ENCODE measurements at regions of chr4 and their contacts with region 1.

Region 1: GRCh38 chr4:110055158-110055768 is 142.6 kb downstream of the EGF start:
- DNase-seq: peak; percentile 80
- ATAC-seq: peak; percentile 93
- H3K4me3 ChIP-seq: peak overlapping the region; percentile 39; the same call in 1 of the 2 replicates
- H3K27ac ChIP-seq: peak overlapping the region; percentile 68
- H3K4me1 ChIP-seq: peaks cover 25% of the 10 kb centered on the region
- H3K27me3 ChIP-seq: no peaks in the 10 kb centered on the region
- CTCF ChIP-seq: no peak
- EP300 ChIP-seq: 0 out of 4 replicates have a peak, but pooled peaks of 1 of the 2 experiments have one; percentile 31
- POLR2A ChIP-seq: no peak
- RAD21 ChIP-seq: no peak

Region 2: DNA sequence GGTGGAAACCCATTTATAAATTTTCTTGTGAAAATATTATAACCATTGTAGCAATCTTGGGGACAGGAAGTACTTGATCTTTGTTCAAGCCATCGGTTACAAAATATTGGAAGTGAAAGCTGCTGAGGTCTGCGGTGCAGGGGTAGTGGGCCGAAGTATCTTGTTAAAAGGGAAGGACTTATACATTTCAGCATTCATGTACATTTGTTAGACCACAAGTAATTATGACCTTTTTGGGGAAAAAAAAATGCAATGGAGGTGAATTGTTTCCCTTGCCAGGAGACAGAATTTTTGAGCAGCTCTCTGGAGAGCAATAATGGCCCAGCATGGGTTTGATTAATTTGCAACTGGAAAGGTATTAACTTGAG is 21.3 kb before region 1 on chr4:
- CTCF ChIA-PET with region 1: interaction called, 13 read pairs
- POLR2A ChIA-PET with region 1: interaction called, 3 read pairs
- RAD21 ChIA-PET with region 1: interaction called, 12 read pairs
- SMC1A ChIA-PET with region 1: interaction called, 17 read pairs
- in situ Hi-C with region 1: no loop called
- intact Hi-C with region 1: no loop called
- DNase-seq: peak; percentile 63
- ATAC-seq: peak; percentile 99
- H3K4me3 ChIP-seq: no peak overlapping the region
- H3K27ac ChIP-seq: no peak overlapping the region
- H3K4me1 ChIP-seq: peaks cover 14% of the 10 kb centered on the region
- H3K27me3 ChIP-seq: no peaks in the 10 kb centered on the region
- CTCF ChIP-seq: no peak
- EP300 ChIP-seq: peak; percentile 58 to 77; a peak in 3 of 4 replicates
- POLR2A ChIP-seq: no peak
- RAD21 ChIP-seq: no peak

Region 3: GRCh38 chr4:110088670-110089069 is 33.4 kb after region 1 on chr4:
- CTCF ChIA-PET with region 1: interaction called, 11 read pairs
- POLR2A ChIA-PET with region 1: interaction called, 3 read pairs
- RAD21 ChIA-PET with region 1: interaction called, 6 read pairs
- SMC1A ChIA-PET with region 1: interaction called, 12 read pairs
- in situ Hi-C with region 1: no loop called
- intact Hi-C with region 1: no loop called
- DNase-seq: peak; percentile 23
- ATAC-seq: peak; percentile 90
- H3K4me3 ChIP-seq: no peak overlapping the region
- H3K27ac ChIP-seq: no peak overlapping the region
- H3K4me1 ChIP-seq: no peaks in the 10 kb centered on the region
- H3K27me3 ChIP-seq: no peaks in the 10 kb centered on the region
- CTCF ChIP-seq: no peak
- EP300 ChIP-seq: no peak
- POLR2A ChIP-seq: no peak
- RAD21 ChIP-seq: no peak

Region 4: DNA sequence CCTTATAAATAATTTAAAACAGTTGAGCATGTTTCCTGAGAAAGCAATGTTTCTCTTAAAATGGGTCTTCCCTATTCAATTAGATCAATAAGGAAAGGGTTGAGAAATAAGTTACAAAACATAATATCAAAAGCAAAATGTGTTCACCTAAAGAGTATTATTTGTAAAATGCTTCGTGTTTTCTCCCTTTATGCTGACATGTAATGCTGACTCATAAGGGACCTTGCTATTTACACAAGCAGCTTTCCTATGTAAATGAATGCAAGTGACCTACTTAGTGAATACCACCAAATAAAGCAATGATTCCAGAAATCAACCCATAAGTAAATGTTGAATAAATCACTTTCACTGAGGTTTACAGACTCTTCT is 51.6 kb after region 1 on chr4:
- CTCF ChIA-PET with region 1: interaction called, 22 read pairs
- POLR2A ChIA-PET with region 1: no interaction called
- RAD21 ChIA-PET with region 1: interaction called, 6 read pairs
- SMC1A ChIA-PET with region 1: interaction called, 13 read pairs
- in situ Hi-C with region 1: no loop called
- intact Hi-C with region 1: loop called (anchors 5 kb)
- DNase-seq: no peak
- ATAC-seq: peak; percentile 79
- H3K4me3 ChIP-seq: no peak overlapping the region
- H3K27ac ChIP-seq: peak overlapping the region; percentile 14; the same call in 1 of the 2 replicates
- H3K4me1 ChIP-seq: peaks cover 26% of the 10 kb centered on the region
- H3K27me3 ChIP-seq: no peaks in the 10 kb centered on the region
- CTCF ChIP-seq: no peak
- EP300 ChIP-seq: peak in 1 of 2 experiments; percentile 30; a peak in 1 of 4 replicates
- POLR2A ChIP-seq: no peak
- RAD21 ChIP-seq: no peak

Region 5: GRCh38 chr4:110184140-110184790 is 129.0 kb after region 1 on chr4:
- CTCF ChIA-PET with region 1: interaction called, 17 read pairs
- POLR2A ChIA-PET with region 1: interaction called, 5 read pairs
- RAD21 ChIA-PET with region 1: interaction called, 7 read pairs
- SMC1A ChIA-PET with region 1: interaction called, 14 read pairs
- in situ Hi-C with region 1: no loop called
- intact Hi-C with region 1: no loop called
- DNase-seq: no peak
- ATAC-seq: peak; percentile 58
- H3K4me3 ChIP-seq: no peak overlapping the region
- H3K27ac ChIP-seq: no peak overlapping the region
- H3K4me1 ChIP-seq: peaks cover 7% of the 10 kb centered on the region; the same call in 1 of the 2 replicates
- H3K27me3 ChIP-seq: no peaks in the 10 kb centered on the region
- CTCF ChIP-seq: no peak
- EP300 ChIP-seq: no peak
- POLR2A ChIP-seq: no peak
- RAD21 ChIP-seq: no peak

Region 6: GRCh38 chr4:110193822-110194761 is 138.8 kb after region 1 on chr4:
- CTCF ChIA-PET with region 1: interaction called, 16 read pairs
- POLR2A ChIA-PET with region 1: interaction called, 22 read pairs
- RAD21 ChIA-PET with region 1: interaction called, 22 read pairs
- SMC1A ChIA-PET with region 1: interaction called, 23 read pairs
- in situ Hi-C with region 1: no loop called
- intact Hi-C with region 1: loop called (anchors 1 kb)
- DNase-seq: peak; percentile 95
- ATAC-seq: peak; percentile 74
- H3K4me3 ChIP-seq: no peak overlapping the region
- H3K27ac ChIP-seq: peak overlapping the region; percentile 75
- H3K4me1 ChIP-seq: peaks cover 19% of the 10 kb centered on the region
- H3K27me3 ChIP-seq: no peaks in the 10 kb centered on the region
- CTCF ChIP-seq: no peak
- EP300 ChIP-seq: no peak
- POLR2A ChIP-seq: peak; percentile 89
- RAD21 ChIP-seq: no peak

Region 7: GRCh38 chr4:110287130-110287529 is 231.9 kb after region 1 on chr4:
- CTCF ChIA-PET with region 1: no interaction called
- POLR2A ChIA-PET with region 1: interaction called, 4 read pairs
- RAD21 ChIA-PET with region 1: interaction called, 14 read pairs
- SMC1A ChIA-PET with region 1: interaction called, 18 read pairs
- in situ Hi-C with region 1: no loop called
- intact Hi-C with region 1: loop called (anchors 5 kb)
- DNase-seq: peak; percentile 83
- ATAC-seq: peak; percentile 99
- H3K4me3 ChIP-seq: no peak overlapping the region
- H3K27ac ChIP-seq: peak overlapping the region; percentile 49
- H3K4me1 ChIP-seq: peaks cover 14% of the 10 kb centered on the region
- H3K27me3 ChIP-seq: no peaks in the 10 kb centered on the region
- CTCF ChIP-seq: no peak
- EP300 ChIP-seq: peak; percentile 51 to 81
- POLR2A ChIP-seq: no peak
- RAD21 ChIP-seq: 0 out of 2 replicates have a peak, but pooled peaks have one; percentile 16

Measured in GM12878 (cell line).